Activated CD4-positive, alpha-beta memory T cell treated with anti-CD3 and anti-CD28 coated beads for 36 hours (primary cell): ENCODE measurements at regions of chr7 and their contacts with region 1.

Region 1: DNA sequence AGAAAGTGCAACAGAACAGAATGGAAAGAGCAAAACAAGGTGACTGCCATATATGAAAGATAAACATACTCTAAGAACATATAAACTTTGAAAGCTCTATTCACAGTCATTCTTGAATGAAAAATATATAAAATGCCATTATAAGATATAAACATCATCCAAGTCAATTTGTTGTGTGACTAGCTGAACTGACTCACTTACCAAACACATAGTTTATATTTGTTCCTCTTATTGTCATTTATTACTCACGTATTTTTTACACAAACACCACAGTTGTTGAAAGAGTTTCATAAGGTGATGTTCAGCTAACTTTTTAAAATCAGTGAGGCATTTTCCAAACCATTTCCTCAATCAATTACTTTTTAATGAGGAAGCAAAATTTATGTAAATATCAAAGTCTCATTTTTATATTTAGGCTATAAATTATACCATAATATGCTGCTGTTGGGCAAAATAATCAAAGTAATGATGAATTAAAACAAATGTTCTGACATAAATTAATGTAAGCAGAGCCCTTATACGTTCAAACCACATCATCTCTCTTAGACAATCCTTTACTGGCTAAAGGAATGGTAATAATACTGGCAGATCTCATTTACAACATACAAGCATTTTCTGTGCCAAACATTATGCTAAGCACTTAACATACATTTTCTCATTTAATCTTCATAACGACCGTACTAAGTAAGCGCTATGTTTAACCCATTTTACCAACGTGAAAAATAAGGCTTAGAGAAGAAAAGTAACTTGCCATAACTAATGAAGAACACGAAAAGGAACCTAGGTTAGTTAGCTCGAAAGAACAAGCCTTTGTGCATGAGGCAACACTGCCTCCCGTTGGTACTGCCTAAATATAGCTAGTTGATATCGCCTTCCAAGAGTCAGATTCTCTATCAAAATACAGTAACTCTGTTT is 7.3 kb downstream of the LRRN3 start:
- DNase-seq: peak; percentile 69
- H3K4me3 Mint-ChIP-seq: peak overlapping the region; percentile 15
- H3K27ac Mint-ChIP-seq: peak overlapping the region; percentile 51
- H3K4me1 Mint-ChIP-seq: peaks cover 36% of the 10 kb centered on the region
- H3K27me3 Mint-ChIP-seq: no peaks in the 10 kb centered on the region

Region 2: GRCh38 chr7:109844362-109844761 is 1253.9 kb before region 1 on chr7:
- CTCF ChIA-PET with region 1: interaction called, 13 read pairs
- POLR2A ChIA-PET with region 1: no interaction called
- intact Hi-C with region 1: no loop called
- DNase-seq: no peak
- H3K4me3 Mint-ChIP-seq: no peak overlapping the region
- H3K27ac Mint-ChIP-seq: no peak overlapping the region
- H3K4me1 Mint-ChIP-seq: no peaks in the 10 kb centered on the region
- H3K27me3 Mint-ChIP-seq: no peaks in the 10 kb centered on the region

Region 3: GRCh38 chr7:110090110-110090769 is 1008.0 kb before region 1 on chr7:
- CTCF ChIA-PET with region 1: interaction called, 5 read pairs
- POLR2A ChIA-PET with region 1: no interaction called
- intact Hi-C with region 1: loop called (anchors 2 kb)
- DNase-seq: no peak
- H3K4me3 Mint-ChIP-seq: no peak overlapping the region
- H3K27ac Mint-ChIP-seq: no peak overlapping the region
- H3K4me1 Mint-ChIP-seq: no peaks in the 10 kb centered on the region
- H3K27me3 Mint-ChIP-seq: no peaks in the 10 kb centered on the region

Region 4: DNA sequence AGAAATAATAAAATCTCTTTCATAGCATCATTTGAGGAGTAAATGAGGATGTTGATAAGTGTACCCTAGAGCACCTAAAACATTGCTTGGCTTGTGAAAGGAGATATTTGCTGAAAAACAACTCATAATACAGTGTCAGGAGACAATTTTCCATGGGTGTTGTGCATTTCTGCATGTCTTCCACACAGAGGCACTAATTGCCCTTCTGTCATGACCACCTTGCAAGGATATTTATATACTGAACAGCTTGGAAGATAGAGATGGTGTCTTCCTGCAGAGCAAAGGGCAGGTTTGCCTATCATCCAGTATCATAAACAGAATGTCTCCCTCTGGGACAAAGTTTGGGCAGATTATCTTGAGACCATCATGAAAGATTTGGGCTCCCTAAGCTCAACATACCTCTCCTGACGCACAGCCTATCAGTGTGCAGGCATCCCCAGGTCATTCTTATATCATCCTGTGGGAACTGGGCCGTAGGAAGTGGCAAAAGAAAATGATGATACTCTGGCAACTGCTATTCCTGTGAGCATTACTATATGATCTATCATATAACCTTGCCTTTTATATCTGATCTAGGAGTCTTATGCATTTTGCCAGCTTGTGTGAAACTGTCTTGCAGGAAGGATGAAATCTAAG is 502.5 kb before region 1 on chr7:
- CTCF ChIA-PET with region 1: interaction called, 3 read pairs
- POLR2A ChIA-PET with region 1: no interaction called
- intact Hi-C with region 1: loop called (anchors 5 kb)
- DNase-seq: no peak
- H3K4me3 Mint-ChIP-seq: no peak overlapping the region
- H3K27ac Mint-ChIP-seq: no peak overlapping the region
- H3K4me1 Mint-ChIP-seq: no peaks in the 10 kb centered on the region
- H3K27me3 Mint-ChIP-seq: no peaks in the 10 kb centered on the region

Region 5: GRCh38 chr7:111735661-111736551 is 637.6 kb after region 1 on chr7:
- CTCF ChIA-PET with region 1: interaction called, 5 read pairs
- POLR2A ChIA-PET with region 1: no interaction called
- intact Hi-C with region 1: loop called (anchors 2 kb)
- DNase-seq: peak; percentile 40
- H3K4me3 Mint-ChIP-seq: no peak overlapping the region
- H3K27ac Mint-ChIP-seq: no peak overlapping the region
- H3K4me1 Mint-ChIP-seq: no peaks in the 10 kb centered on the region
- H3K27me3 Mint-ChIP-seq: peaks cover 5% of the 10 kb centered on the region